GM12878 (cell line): ENCODE measurements at regions of chr11 and their contacts with region 1.

Region 1: DNA sequence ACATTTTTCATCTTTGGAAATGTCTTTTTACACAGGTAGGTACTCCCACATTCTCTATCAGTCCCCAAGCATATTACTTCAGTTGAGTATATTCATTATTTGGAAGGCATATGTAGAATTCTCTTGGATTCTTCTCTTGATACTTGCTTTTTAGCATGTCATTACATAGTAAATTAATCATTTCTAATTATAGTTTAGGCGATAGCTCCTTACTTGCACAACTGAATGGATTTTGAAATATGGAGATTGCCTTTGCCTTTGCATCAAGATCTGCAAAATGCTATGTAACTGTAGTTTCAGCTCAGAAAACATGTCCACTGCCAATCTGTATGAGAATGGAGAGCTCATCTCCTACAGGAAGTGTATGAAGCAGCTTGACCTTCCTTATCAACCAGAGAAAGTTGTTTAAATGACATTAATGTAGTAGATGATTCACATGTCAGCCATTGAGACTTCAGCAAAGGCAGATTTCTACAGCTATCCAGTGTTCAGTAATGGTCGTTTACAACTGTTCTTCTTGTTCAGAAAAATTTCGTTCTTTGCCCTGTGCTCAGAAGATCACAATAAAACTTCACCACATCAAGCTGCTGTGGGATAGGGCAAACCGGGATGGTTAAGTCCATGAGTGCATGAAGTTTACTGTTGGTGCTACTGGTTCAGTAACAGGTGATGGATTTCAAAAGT is 61.6 kb downstream of the PPP6R3 start:
- DNase-seq: no peak
- ATAC-seq: no peak
- H3K4me3 ChIP-seq: no peak overlapping the region
- H3K27ac ChIP-seq: no peak overlapping the region
- H3K4me1 ChIP-seq: no peaks in the 10 kb centered on the region; the same call in 1 of the 2 replicates
- H3K27me3 ChIP-seq: no peaks in the 10 kb centered on the region
- CTCF ChIP-seq: no peak
- EP300 ChIP-seq: no peak
- POLR2A ChIP-seq: no peak
- RAD21 ChIP-seq: no peak

Region 2: GRCh38 chr11:68532727-68533369 is 10.7 kb after region 1 on chr11:
- CTCF ChIA-PET with region 1: interaction called, 4 read pairs
- POLR2A ChIA-PET with region 1: no interaction called
- RAD21 ChIA-PET with region 1: no interaction called
- SMC1A ChIA-PET with region 1: interaction called, 11 read pairs
- in situ Hi-C with region 1: no loop called
- intact Hi-C with region 1: no loop called
- DNase-seq: no peak
- ATAC-seq: no peak
- H3K4me3 ChIP-seq: no peak overlapping the region
- H3K27ac ChIP-seq: no peak overlapping the region
- H3K4me1 ChIP-seq: no peaks in the 10 kb centered on the region
- H3K27me3 ChIP-seq: no peaks in the 10 kb centered on the region
- CTCF ChIP-seq: no peak
- EP300 ChIP-seq: no peak
- POLR2A ChIP-seq: no peak
- RAD21 ChIP-seq: no peak

Region 3: GRCh38 chr11:68550485-68550817 is 28.3 kb after region 1 on chr11:
- CTCF ChIA-PET with region 1: no interaction called
- POLR2A ChIA-PET with region 1: no interaction called
- RAD21 ChIA-PET with region 1: no interaction called
- SMC1A ChIA-PET with region 1: no interaction called
- in situ Hi-C with region 1: no loop called
- intact Hi-C with region 1: no loop called
- DNase-seq: no peak
- ATAC-seq: no peak
- H3K4me3 ChIP-seq: no peak overlapping the region
- H3K27ac ChIP-seq: no peak overlapping the region; the same call in 1 of the 2 replicates
- H3K4me1 ChIP-seq: no peaks in the 10 kb centered on the region
- H3K27me3 ChIP-seq: no peaks in the 10 kb centered on the region
- CTCF ChIP-seq: no peak
- EP300 ChIP-seq: no peak
- POLR2A ChIP-seq: no peak
- RAD21 ChIP-seq: no peak

Region 4: GRCh38 chr11:68659158-68659921 is 137.2 kb after region 1 on chr11:
- CTCF ChIA-PET with region 1: no interaction called
- POLR2A ChIA-PET with region 1: no interaction called
- RAD21 ChIA-PET with region 1: no interaction called
- SMC1A ChIA-PET with region 1: no interaction called
- in situ Hi-C with region 1: no loop called
- intact Hi-C with region 1: no loop called
- DNase-seq: no peak
- ATAC-seq: no peak
- H3K4me3 ChIP-seq: no peak overlapping the region
- H3K27ac ChIP-seq: no peak overlapping the region
- H3K4me1 ChIP-seq: no peaks in the 10 kb centered on the region
- H3K27me3 ChIP-seq: no peaks in the 10 kb centered on the region; a peak in 2 of 4 replicates
- CTCF ChIP-seq: no peak
- EP300 ChIP-seq: no peak
- POLR2A ChIP-seq: no peak
- RAD21 ChIP-seq: no peak